Esophagus muscularis mucosa (tissue), 4 donors: ENCODE measurements at regions of chr2 and their contacts with region 1.

Region 1: GRCh38 chr2:43495727-43496126 is 100.1 kb downstream of the THADA start:
- DNase-seq: no peak
- H3K4me3 ChIP-seq: no peak overlapping the region
- H3K27ac ChIP-seq: peak overlapping the region in 1 of 4 donors; percentile 25
- H3K4me1 ChIP-seq: peaks cover 0 to 13% (median 7%) of the 10 kb centered on the region in 4 donors
- H3K27me3 ChIP-seq: no peaks in the 10 kb centered on the region
- CTCF ChIP-seq: no peak
- EP300 ChIP-seq: peak; percentile 82
- POLR2A ChIP-seq: no peak

Region 2: DNA sequence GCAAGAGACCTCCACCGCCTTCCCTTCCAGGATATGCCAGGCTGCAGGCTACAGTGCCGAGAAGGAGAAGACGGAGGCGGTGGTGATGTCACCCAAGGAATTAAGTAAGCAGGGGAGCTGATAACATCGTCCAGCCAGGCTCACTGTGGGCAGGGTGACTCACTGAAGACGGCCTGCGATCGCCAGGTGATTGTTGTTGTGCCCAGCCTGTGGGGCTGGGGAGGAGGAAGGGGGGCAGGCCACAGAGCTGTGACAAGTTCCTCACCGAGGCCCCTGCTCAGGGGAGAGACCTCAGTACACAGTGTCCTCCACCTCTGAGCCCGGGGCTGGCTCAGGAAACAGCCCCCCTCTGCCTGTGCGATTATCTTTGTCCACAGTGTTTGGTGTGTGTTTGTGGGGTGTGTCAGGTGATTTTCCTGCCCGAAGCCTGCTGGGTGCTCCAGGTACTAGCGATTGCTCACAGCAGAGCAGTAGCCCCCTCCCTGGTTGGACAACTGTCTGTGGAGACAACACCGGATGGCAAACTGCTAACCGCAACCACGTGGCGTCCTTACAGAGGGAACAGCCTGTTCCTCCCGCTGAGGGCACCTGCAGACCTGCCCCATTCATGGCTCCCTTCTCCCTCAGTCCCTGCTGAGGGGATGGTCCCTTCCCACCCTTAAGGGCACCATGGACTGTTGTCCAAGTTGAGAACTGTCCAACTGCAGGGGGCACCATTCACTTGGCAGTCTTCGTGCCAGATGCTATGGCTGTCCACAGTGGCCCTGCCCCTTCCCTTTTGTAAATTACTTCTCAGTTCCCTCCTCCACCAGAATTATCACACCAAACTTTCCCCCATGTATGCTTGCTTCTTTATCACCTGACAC is 364.5 kb before region 1 on chr2:
- intact Hi-C with region 1: loop called (anchors 10 kb)
- DNase-seq: peak; percentile 95
- H3K4me3 ChIP-seq: no peak overlapping the region
- H3K27ac ChIP-seq: peak overlapping the region; percentile 38 to 68 (median 63)
- H3K4me1 ChIP-seq: peaks cover 31 to 75% (median 68%) of the 10 kb centered on the region in 4 donors
- H3K27me3 ChIP-seq: no peaks in the 10 kb centered on the region
- CTCF ChIP-seq: peak; percentile 37 to 47 (median 45)
- EP300 ChIP-seq: no peak
- POLR2A ChIP-seq: no peak

Region 3: DNA sequence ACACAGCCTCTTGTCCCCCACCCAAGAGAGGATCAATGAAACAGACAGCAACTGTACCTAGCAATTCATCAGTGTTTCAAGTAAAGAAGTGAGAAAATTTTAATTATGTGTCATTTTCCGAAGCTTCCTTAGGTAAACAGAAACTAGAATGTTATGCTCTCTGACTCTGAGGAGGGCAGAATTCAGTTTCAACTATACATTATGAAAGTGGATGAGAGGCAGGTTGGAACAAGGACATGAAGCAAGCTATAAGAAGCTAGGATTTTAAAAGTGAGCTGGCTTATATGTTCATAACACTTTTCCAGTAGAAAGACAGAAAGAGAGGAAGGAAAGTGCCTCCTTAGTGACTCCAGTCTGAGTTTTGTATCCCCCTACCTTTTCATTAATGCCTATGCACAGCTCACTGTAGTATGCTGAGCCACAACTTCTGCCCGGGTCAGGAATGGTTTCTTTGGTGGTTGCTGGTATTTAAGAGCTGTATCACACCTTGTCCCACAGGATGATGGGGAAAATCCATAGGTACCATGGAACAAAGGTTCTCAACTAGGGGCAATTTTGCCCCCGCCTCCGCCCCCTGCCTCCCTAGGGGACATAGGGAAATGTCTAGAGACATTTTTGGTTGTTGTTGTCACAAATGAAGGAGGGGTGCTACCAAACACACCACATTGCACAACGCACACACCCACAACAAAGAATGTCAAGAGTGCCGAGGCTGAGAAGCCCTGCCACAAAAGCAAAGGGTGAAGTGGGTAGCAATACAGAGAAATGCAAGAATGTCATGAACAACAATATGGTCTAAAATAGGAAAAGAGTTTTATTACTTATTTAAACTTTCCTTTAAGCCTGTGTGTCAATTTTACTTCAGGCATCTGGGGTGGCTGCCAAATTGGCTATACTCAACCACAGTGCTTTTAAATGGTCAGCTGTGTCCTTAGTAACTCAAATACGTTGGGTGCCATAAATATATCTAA is 108.3 kb before region 1 on chr2:
- intact Hi-C with region 1: no loop called
- DNase-seq: no peak
- H3K4me3 ChIP-seq: no peak overlapping the region
- H3K27ac ChIP-seq: peak overlapping the region in 2 of 4 donors; percentile 17 to 19
- H3K4me1 ChIP-seq: peaks cover 6 to 49% (median 37%) of the 10 kb centered on the region in 4 donors
- H3K27me3 ChIP-seq: no peaks in the 10 kb centered on the region
- CTCF ChIP-seq: no peak
- EP300 ChIP-seq: no peak
- POLR2A ChIP-seq: no peak